Esophagus muscularis mucosa (tissue), 4 donors: ENCODE measurements at regions of chr3 and their contacts with region 1.

Region 1: GRCh38 chr3:179604321-179605078 is at the starts of genes MRPL47 and NDUFB5:
- DNase-seq: peak; percentile 98
- H3K4me3 ChIP-seq: peak within 1 kb of the TSS; percentile 71 to 92 (median 79)
- H3K27ac ChIP-seq: peak within 1 kb of the TSS; percentile 89 to 93 (median 92)
- H3K4me1 ChIP-seq: peaks cover 20 to 62% (median 51%) of the 10 kb centered on the region in 4 donors
- H3K27me3 ChIP-seq: no peaks in the 10 kb centered on the region
- CTCF ChIP-seq: no peak
- EP300 ChIP-seq: no peak
- POLR2A ChIP-seq: peak; percentile 51
- total RNA-seq, gene MRPL47: 24.4 to 33.6 (median 30.6) TPM
- total RNA-seq, gene NDUFB5: 62.7 to 112 (median 83.1) TPM

Region 2: DNA sequence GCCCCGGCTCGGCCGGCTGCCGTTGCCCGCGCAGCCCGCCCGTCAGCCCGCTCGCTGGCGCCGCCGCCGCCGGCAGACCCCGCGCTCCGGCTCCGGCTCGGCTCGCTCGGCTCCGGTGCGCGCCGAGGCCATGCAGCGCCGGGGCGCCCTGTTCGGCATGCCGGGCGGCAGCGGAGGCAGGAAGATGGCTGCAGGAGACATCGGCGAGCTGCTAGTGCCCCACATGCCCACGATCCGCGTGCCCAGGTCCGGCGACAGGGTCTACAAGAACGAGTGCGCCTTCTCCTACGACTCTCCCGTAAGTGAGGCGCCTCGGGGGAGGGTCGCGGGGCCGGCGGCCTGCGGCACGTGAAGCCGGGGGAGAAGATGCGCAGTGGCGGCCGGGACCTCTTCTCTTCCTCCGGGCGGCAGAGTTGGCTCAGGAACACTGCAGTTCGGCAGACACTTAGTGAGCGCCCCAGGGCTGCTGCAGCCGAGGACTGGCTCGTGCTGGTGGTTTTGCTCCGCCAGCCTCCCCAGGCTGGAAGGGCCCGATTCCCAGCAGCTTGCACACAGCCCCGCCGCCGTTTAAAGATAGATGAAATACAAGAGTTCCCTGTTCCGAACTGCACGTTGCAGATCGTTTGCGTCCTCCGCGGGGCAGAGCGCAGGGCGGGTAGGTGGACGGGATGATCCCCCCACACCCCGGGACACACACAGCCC is 48.7 kb after region 1 on chr3:
- intact Hi-C with region 1: loop called (anchors 5 kb)
- DNase-seq: no peak
- H3K4me3 ChIP-seq: peak overlapping the region; percentile 86 to 94 (median 89)
- H3K27ac ChIP-seq: peak overlapping the region; percentile 95 to 97 (median 96)
- H3K4me1 ChIP-seq: peaks cover 4 to 27% (median 17%) of the 10 kb centered on the region in 4 donors
- H3K27me3 ChIP-seq: no peaks in the 10 kb centered on the region
- CTCF ChIP-seq: peak in 1 of 3 experiments; percentile 12
- EP300 ChIP-seq: no peak
- POLR2A ChIP-seq: no peak

Region 3: GRCh38 chr3:180478695-180479094 is 874.2 kb after region 1 on chr3:
- intact Hi-C with region 1: no loop called
- DNase-seq: no peak
- H3K4me3 ChIP-seq: no peak overlapping the region
- H3K27ac ChIP-seq: no peak overlapping the region
- H3K4me1 ChIP-seq: no peaks in the 10 kb centered on the region
- H3K27me3 ChIP-seq: no peaks in the 10 kb centered on the region
- CTCF ChIP-seq: no peak
- EP300 ChIP-seq: no peak
- POLR2A ChIP-seq: no peak